Activated B cell treated with CpG ODN at 0.5 μM for 24 hours (primary cell): ENCODE measurements at regions of chr15 and their contacts with region 1.

Region 1: DNA sequence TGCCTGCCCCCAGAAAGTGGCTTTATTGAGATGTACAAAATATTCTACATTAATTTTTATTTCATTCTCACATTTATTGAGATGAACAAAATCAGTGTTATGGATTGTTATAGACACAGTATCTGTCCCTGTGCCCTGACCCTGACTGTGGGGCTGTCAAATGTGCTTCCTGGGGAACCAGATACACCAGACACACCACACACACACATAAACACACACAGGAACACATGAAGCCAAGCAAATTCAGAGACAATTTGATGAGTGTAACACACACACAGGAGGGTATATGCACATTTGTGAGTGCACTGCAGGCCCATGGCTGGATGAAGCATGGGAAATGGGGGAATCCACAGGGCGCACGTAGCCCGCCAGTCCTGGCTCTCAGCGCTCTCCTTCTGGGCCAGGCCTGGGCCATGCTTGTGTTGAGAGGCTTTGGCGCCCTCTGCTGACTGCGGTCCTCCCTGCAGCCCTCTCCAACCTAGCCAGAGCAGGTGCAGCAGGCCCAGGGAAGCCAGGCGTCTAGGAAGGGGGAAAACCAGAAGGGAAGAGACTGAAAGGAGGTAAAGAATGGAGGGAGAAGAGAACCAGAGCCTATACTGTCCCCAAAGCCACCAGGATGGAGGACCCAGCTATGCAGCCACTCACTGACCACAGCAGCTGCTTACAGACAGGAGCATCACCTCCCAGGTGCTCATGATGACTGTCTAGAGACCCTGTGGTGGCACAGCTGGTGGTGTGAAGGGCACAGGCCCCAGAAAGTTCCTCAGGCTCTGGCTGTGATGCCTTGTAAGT is 18.0 kb upstream of the LOXL1 start:
- DNase-seq: peak; percentile 55
- ATAC-seq: peak; percentile 82
- H3K4me3 Mint-ChIP-seq: no peak overlapping the region
- H3K27ac Mint-ChIP-seq: no peak overlapping the region
- H3K4me1 Mint-ChIP-seq: no peaks in the 10 kb centered on the region
- H3K27me3 Mint-ChIP-seq: peaks cover 11% of the 10 kb centered on the region
- CTCF ChIP-seq: peak; percentile 55

Region 2: DNA sequence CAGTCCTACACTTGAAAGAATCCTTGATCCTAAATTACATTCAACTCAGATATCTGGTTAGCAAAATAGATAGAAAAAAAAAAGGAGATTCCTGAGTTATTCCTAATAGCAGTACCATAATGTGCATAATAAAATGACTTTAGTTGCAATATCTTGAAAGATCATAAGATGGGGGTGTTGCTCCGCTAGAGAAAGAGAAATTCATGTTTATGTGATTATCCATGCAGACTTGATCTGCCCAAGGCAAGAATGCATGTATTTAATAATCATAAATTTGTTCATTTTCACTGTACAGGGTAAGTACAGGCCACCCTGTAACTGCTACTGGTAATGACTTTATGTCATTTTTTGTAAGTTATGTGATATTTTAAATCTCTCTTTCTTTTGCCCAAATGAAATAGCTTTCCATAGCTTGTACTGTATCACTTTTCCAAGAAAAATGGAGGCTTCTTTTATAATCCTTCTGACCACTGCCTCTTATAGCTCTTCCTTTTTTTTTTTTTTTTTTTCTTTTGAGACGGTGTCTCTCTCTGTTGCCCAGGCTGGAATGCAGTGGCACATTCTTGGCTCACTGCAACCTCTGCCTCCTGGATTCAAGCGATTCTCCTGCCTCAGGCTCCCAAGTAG is 624.0 kb before region 1 on chr15:
- CTCF ChIA-PET with region 1: no interaction called
- POLR2A ChIA-PET with region 1: no interaction called
- intact Hi-C with region 1: loop called (anchors 5 kb)
- DNase-seq: no peak
- ATAC-seq: no peak
- H3K4me3 Mint-ChIP-seq: no peak overlapping the region
- H3K27ac Mint-ChIP-seq: no peak overlapping the region
- H3K4me1 Mint-ChIP-seq: peaks cover 22% of the 10 kb centered on the region
- H3K27me3 Mint-ChIP-seq: peaks cover 2% of the 10 kb centered on the region
- CTCF ChIP-seq: no peak

Region 3: GRCh38 chr15:73873889-73874511 is 34.2 kb before region 1 on chr15:
- CTCF ChIA-PET with region 1: interaction called, 8 read pairs
- POLR2A ChIA-PET with region 1: no interaction called
- intact Hi-C with region 1: loop called (anchors 1 kb)
- DNase-seq: no peak
- ATAC-seq: no peak
- H3K4me3 Mint-ChIP-seq: no peak overlapping the region
- H3K27ac Mint-ChIP-seq: no peak overlapping the region
- H3K4me1 Mint-ChIP-seq: no peaks in the 10 kb centered on the region
- H3K27me3 Mint-ChIP-seq: peaks cover 35% of the 10 kb centered on the region
- CTCF ChIP-seq: no peak

Region 4: DNA sequence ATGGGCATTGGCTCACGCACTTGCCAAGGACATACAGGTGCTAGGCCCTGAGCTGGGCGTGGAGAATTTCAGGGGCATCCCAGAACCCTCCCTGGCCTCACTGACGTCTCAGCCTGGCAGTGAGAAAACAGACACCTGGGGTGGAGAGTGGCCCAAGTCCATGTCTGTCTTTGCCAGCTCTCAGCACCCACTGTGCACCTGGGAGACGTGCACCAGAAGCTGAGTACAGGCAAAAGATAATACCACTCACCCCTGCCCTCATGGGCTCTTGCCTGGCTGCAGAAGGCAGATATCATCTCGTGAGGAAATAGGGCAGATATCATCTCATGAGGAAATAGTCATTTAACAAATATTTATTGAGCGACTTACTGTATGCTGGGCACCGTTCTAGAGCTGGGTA is 26.1 kb after region 1 on chr15:
- CTCF ChIA-PET with region 1: no interaction called
- POLR2A ChIA-PET with region 1: no interaction called
- intact Hi-C with region 1: no loop called
- DNase-seq: no peak
- ATAC-seq: no peak
- H3K4me3 Mint-ChIP-seq: no peak overlapping the region
- H3K27ac Mint-ChIP-seq: no peak overlapping the region
- H3K4me1 Mint-ChIP-seq: no peaks in the 10 kb centered on the region
- H3K27me3 Mint-ChIP-seq: peaks cover 22% of the 10 kb centered on the region
- CTCF ChIP-seq: no peak

Region 5: DNA sequence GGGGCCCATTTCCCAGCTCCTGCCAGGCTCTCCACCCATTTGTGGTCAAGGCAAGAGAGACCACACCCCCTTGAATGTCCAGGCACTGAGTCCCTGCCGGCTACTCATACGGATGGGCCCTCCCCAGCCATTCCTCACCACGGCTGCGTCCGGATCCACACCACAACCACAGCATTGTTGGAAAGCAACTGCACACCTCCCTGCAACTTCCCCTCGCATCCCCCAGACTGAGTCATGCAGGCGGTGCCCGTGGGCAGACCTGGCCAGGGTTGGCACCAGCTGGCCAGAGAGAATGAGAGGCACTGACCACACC is 48.5 kb after region 1 on chr15:
- CTCF ChIA-PET with region 1: no interaction called
- POLR2A ChIA-PET with region 1: no interaction called
- intact Hi-C with region 1: no loop called
- DNase-seq: no peak
- ATAC-seq: no peak
- H3K4me3 Mint-ChIP-seq: no peak overlapping the region
- H3K27ac Mint-ChIP-seq: no peak overlapping the region
- H3K4me1 Mint-ChIP-seq: peaks cover 11% of the 10 kb centered on the region
- H3K27me3 Mint-ChIP-seq: peaks cover 2% of the 10 kb centered on the region
- CTCF ChIP-seq: no peak

Region 6: DNA sequence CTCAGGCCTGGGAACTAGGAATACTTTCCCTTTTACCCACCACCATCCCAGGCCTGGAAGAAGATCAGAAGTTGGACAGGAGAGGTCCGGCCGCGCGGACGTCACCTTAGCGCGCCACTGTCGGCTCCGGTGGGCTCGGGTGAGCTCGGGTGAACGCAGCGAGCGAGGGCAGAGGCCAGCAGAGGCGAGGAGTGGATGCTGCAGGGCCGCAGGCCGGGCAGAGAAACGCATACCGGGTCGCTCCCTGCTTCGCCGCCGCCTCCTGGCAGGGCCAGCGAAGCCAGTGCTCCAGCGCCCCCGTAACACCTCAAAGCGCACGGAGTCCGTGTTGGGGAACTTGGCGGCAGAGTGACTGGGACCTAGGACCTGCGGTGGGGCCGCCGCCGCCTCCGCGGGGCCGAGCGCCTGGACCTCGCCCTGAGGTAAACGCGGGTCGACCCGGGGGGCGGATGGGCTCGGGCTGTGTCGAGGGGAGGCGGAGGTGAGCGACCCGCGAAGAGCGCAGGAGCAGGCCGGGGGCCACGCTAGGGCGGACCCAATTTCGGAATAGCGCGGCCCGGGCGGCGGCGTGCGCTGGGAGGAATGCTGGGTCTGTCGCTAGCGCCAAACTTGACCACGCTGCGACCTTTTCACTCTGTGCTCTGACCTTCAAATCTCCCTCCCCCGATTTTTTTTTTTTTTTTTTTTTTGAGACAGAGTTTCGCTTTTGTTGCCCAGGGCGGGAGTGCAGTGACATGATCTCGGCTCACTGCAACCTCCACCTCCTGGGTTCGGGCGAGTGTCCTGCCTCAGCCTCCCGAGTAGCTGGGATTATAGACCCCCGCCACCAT is 457.6 kb after region 1 on chr15:
- CTCF ChIA-PET with region 1: no interaction called
- POLR2A ChIA-PET with region 1: no interaction called
- intact Hi-C with region 1: no loop called
- DNase-seq: no peak
- ATAC-seq: peak; percentile 52
- H3K4me3 Mint-ChIP-seq: peak overlapping the region; percentile 67
- H3K27ac Mint-ChIP-seq: no peak overlapping the region
- H3K4me1 Mint-ChIP-seq: peaks cover 4% of the 10 kb centered on the region
- H3K27me3 Mint-ChIP-seq: peaks cover 37% of the 10 kb centered on the region
- CTCF ChIP-seq: no peak